ENCODE measurements at regions of chr12 and their contacts with region 1.

Region 1: DNA sequence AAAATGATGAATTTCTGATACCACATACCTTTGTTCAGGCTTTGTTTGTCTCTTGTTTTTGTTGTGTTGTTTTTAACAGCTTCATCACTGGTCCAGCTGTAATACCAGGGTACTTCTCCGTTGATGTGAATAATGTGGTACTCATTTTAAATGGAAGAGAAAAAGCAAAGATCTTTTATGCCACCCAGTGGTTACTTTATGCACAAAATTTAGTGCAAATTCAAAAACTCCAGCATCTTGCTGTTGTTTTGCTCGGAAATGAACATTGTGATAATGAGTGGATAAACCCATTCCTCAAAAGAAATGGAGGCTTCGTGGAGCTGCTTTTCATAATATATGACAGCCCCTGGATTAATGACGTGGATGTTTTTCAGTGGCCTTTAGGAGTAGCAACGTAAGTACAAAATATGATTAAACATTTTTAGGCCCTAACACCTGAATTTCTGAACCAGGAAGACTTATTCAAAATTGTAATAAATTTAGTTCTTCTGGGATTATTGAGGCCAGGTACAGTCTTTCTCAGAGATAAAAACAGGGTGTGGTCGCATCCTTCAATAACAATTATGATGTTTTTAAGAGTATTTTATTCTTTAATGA is 22.4 kb downstream of the RXYLT1 start:
- DNase-seq: no peak

Region 2: GRCh38 chr12:63103494-63104131 is 698.5 kb before region 1 on chr12:
- intact Hi-C with region 1: loop called (anchors 10 kb)
- DNase-seq: no peak

Region 3: GRCh38 chr12:63420206-63420644 is 381.9 kb before region 1 on chr12:
- intact Hi-C with region 1: loop called (anchors 10 kb)
- DNase-seq: no peak